Cardiac septum (tissue), 1 donor: ENCODE measurements at regions of chr11 and their contacts with region 1.

Region 1: DNA sequence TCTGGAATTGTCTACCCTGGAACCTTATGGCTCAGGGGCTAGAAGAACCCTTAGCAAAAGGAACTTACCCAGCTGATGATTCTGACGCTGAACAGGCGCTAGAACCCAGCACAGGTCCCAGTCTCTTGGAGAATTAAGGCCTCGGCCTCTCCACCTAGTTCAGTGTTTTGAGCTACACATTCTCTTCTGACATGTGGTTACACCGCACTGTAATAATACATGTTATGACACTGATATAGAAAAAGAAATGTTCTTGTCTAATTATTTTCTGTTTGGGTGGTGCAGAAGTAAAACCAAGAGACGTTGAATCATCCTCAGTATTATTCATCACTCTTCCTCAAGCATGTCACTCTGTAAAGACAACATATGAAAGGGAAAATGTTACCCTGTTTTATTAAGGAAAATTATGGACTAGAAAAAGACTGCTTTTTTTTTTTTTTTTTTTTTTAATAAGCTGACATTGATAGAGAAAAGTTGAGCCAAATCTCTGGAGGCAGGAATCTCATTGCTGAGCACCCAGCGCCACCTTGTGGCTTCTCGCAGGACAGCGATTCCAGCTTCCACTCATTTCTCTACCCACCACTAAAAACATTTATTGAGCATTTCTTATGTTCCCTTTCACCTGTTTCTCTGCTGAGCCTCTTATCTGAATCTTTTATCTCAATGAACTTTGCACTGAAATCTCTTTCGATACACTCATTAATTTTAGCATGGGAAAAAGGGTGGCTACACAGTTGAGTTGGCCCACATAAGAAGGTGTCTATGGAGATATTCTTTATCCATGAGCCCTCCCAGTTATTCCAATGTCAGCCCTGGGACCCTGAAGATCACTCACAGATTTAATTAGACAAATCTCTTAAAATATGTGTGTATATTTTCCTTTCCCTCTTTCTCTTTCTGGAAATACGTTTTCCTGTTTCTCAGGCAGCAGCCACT is 12.6 kb upstream of the APLNR start:
- DNase-seq: no peak

Region 2: DNA sequence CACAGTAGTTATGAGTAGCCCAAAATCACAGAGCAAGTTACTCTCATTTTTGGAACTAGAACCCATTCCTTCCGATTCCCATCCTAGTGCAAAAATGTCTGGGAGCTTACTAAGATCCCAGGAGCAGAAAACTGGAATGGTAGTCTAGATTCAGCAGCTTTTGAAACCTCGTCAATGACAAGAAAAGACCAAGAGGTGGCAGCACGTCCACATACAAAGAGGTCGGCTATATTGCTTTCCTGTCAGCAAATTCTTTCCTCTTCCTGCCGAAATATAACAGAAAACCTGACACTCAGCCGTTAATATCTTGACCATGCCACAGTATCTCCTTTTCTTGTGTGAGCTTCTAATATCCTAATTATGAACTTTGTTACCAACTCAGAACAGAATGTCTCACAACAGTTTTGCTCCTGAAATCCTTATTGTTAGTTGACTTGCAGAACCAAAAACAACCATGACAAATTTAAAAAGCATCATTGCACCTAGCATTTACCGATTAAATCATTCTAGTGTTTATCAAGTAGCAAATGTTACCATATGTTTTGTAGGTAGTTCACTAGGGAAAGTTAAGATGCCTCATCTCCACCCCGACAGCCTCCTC is 408.3 kb before region 1 on chr11:
- intact Hi-C with region 1: loop called (anchors 1 kb)
- DNase-seq: no peak

Region 3: DNA sequence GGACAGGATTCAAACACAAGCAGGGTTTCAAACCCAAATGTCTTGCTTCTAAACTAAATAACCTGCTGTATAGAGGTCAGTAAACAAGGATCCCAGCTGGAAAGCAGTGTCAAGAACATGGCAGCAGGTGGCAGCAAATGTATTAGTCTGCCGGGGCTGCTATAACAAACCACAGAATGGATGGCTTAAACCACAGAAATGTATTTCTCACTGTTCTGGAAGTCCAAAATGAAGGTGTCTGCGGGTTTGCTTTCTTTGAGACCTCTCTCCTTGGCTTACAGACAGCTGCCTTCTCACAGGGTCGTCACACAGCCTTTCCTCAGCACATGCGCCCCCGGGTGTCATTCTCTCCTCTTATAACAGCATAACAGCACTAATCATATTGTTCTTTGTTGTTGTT is 133.0 kb before region 1 on chr11:
- intact Hi-C with region 1: loop called (anchors 2 kb)
- DNase-seq: no peak

Region 4: DNA sequence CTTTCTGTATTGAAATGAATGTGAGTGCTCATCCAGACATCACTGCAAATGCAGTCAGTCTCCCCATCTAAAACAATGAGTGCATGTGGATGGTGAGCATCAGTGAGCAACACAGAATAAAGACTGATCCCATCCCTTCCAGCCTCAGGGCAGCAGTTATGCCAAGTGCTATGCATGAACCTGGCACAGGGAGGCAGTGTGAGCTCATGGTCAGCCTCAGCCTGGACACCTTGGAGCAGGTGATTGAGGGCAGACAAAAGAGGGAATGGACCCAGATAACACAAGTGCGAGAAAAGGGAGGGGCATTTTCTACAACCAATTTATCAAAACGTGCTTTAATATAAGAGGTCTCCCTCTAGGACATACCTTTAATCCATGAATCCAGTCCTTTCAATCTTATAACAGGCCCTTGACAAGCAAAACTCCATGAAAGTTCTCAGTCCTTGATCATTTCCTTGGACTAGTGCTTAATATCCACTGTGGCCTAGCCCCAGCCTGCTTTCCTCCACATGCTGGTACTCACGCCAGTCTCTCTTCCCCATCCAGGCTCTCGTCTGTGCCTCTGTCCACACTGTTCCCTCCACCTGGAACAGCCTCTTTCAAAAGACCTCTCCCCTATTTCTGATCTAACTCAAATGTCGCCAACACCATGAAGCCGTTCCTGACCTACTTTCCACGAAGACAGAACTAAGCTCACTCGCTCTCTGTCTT is 118.4 kb before region 1 on chr11:
- intact Hi-C with region 1: loop called (anchors 1 kb)
- DNase-seq: no peak

Region 5: GRCh38 chr11:57311109-57311936 is 61.7 kb after region 1 on chr11:
- intact Hi-C with region 1: no loop called
- DNase-seq: peak; percentile 92

Region 6: DNA sequence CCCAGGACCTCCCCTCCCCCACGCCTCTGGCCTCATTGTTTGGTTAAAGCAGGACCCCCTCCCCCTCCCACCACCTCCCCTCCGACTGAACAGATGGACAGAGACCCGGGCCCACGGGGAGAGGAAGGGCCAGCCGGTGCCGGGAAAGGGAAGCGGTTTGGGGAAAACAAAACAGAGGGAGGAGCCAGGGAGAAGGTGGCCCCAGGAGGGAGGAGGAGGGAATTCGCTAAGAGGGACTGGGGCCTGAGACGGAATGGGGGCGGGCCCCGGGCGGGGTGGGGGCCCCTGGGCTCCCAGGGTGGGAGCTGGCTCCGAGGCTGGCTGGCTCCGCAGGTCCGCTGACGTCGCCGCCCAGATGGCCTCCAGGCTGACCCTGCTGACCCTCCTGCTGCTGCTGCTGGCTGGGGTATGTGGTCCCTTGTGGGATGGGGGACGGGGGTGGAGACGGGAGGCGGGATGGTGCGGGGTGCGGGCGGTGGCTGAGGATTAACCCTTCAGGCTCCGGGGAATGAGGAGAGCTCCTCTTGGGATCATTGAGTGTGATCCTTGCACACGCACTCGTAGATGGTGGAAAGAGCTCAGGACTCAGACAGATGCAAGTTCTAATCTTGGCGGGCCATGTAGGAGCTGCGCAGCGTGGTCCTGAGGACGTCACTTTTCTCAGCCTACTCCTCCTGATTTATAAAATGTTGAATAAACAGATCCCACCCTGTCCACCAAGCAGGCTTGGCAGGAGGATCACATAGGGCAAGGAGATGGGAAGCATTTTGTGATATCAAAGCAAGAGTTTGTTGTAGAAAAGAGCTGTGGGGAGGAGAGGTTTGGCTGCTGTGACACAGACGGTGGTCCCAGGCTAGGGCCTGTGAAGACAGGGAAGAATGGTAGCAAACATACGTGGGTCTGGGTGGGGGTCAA is 348.5 kb after region 1 on chr11:
- intact Hi-C with region 1: no loop called
- DNase-seq: peak; percentile 82